ENCODE measurements at regions of chr3 and their contacts with region 1.

Region 1: DNA sequence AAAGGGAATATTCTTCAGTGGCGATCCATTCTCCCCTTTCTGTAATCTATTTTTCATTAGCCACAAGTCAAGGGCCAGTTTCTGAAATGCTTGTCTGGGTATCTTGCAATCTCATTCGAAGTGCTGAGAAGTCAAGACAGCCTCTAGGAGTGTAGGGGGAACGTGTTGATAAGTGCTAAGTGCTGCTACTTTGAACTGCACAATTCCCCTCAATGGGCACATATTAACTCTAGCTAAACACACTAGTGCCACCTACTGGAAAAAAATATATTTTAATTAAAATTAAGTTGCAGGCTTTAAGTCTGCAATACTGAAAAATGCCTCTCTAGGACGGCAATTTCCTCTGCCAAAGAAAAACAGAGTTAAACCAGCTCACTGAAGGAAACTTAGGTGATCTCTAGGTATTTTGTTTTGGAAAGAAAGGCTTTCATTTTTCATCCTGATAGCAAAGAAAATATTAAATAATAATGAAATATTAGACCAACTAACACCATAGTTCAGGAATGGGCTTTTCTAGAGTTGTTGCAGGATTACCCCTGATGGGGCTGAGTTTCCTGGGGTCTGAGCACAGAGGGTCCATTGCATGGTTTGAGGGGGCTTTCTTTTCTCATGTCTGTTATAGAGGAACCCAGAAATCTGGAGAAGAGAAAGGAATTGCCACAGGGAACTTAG is 181.9 kb upstream of the KBTBD8 start:
- DNase-seq: no peak
- H3K4me3 Mint-ChIP-seq: no peak overlapping the region
- H3K27ac Mint-ChIP-seq: no peak overlapping the region
- H3K4me1 Mint-ChIP-seq: peaks cover 2% of the 10 kb centered on the region
- H3K27me3 Mint-ChIP-seq: peaks cover 1% of the 10 kb centered on the region

Region 2: GRCh38 chr3:66675366-66675765 is 140.9 kb before region 1 on chr3:
- CTCF ChIA-PET with region 1: no interaction called
- POLR2A ChIA-PET with region 1: no interaction called
- intact Hi-C with region 1: no loop called
- DNase-seq: no peak
- H3K4me3 Mint-ChIP-seq: no peak overlapping the region
- H3K27ac Mint-ChIP-seq: no peak overlapping the region
- H3K4me1 Mint-ChIP-seq: peaks cover 8% of the 10 kb centered on the region
- H3K27me3 Mint-ChIP-seq: no peaks in the 10 kb centered on the region

Region 3: DNA sequence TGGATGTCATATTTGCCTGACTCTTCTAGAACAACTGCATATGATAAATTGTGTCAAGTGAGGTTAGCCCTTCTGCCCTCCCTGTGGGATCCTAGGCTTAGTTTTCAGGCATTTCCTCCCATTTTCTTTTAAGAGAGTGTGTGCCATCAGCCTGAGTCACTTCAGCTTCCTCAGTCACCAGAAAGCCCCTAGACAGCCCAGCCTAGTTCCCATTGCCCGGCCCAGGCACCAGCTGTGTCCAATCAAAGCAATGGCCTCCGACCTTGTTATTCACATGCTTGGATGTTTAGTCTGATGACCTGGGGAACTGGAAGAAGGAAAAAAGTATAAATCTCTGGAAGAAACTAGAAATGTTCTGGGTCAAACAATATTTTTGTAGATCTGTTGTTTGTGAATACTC is 93.6 kb before region 1 on chr3:
- CTCF ChIA-PET with region 1: no interaction called
- POLR2A ChIA-PET with region 1: no interaction called
- intact Hi-C with region 1: no loop called
- DNase-seq: no peak
- H3K4me3 Mint-ChIP-seq: no peak overlapping the region
- H3K27ac Mint-ChIP-seq: no peak overlapping the region
- H3K4me1 Mint-ChIP-seq: no peaks in the 10 kb centered on the region
- H3K27me3 Mint-ChIP-seq: peaks cover 4% of the 10 kb centered on the region

Region 4: DNA sequence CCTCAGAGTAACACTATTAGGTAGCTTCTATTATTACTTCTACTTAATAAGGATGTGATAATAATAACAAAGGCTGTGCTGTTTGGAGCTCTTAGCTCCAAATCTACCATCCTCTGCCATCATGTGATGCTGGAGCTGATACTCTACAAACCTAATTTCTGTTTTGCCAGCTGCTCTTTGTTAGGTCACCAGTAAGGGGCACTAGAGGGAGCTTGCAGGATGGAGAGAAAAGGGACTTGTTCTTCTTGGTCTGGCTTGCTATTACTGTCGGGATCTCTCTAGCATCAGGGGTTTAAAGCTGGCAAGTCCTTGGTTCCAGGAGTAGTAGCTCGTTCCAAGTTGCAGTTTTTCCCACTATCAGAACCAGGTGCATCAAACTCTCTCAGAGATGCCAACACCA is 13.0 kb before region 1 on chr3:
- CTCF ChIA-PET with region 1: interaction called, 16 read pairs
- POLR2A ChIA-PET with region 1: interaction called, 3 read pairs
- intact Hi-C with region 1: no loop called
- DNase-seq: no peak
- H3K4me3 Mint-ChIP-seq: no peak overlapping the region
- H3K27ac Mint-ChIP-seq: no peak overlapping the region
- H3K4me1 Mint-ChIP-seq: no peaks in the 10 kb centered on the region
- H3K27me3 Mint-ChIP-seq: peaks cover 13% of the 10 kb centered on the region